Naive thymus-derived CD4-positive, alpha-beta T cell (primary cell): ENCODE measurements at regions of chr1 and their contacts with region 1.

Region 1: GRCh38 chr1:155167166-155168104 is 5.7 kb downstream of the KRTCAP2 start:
- DNase-seq: peak; percentile 69 to 83 (median 81)
- ATAC-seq: peak; percentile 85
- H3K4me3 ChIP-seq: peak overlapping the region; percentile 45
- H3K4me3 Mint-ChIP-seq: peak overlapping the region in 9 of 10 donors; percentile 22 to 76 (median 66)
- H3K27ac ChIP-seq: no peak overlapping the region
- H3K27ac Mint-ChIP-seq: peak overlapping the region in 7 of 9 donors; percentile 7 to 68 (median 42)
- H3K4me1 ChIP-seq: peaks cover 10 to 20% of the 10 kb centered on the region in 2 donors
- H3K4me1 Mint-ChIP-seq: peaks cover 18 to 35% (median 24%) of the 10 kb centered on the region in 7 donors
- H3K27me3 ChIP-seq: no peaks in the 10 kb centered on the region
- H3K27me3 Mint-ChIP-seq: peaks cover 0 to 4% (median 0%) of the 10 kb centered on the region in 5 donors

Region 2: GRCh38 chr1:155135415-155136028 is 31.9 kb before region 1 on chr1 and contains the start of gene SLC50A1:
- CTCF ChIA-PET with region 1: interaction called, 7 read pairs
- POLR2A ChIA-PET with region 1: interaction called, 4 read pairs
- intact Hi-C with region 1: loop called in 1 of 2 experiments (anchors 1 kb)
- DNase-seq: peak; percentile 86 to 96 (median 90)
- ATAC-seq: peak; percentile 93
- H3K4me3 ChIP-seq: peak within 1 kb of the TSS; percentile 99
- H3K4me3 Mint-ChIP-seq: peak within 1 kb of the TSS; percentile 91 to 100 (median 98)
- H3K27ac ChIP-seq: peak within 1 kb of the TSS; percentile 99
- H3K27ac Mint-ChIP-seq: peak within 1 kb of the TSS; percentile 95 to 100 (median 98)
- H3K4me1 ChIP-seq: peaks cover 8 to 15% of the 10 kb centered on the region in 2 donors
- H3K4me1 Mint-ChIP-seq: peaks cover 41 to 58% (median 46%) of the 10 kb centered on the region in 7 donors
- H3K27me3 ChIP-seq: no peaks in the 10 kb centered on the region
- H3K27me3 Mint-ChIP-seq: peaks cover 0 to 2% (median 0%) of the 10 kb centered on the region in 5 donors
- total RNA-seq, gene SLC50A1: 21.1 to 35.6 (median 24.3) TPM